Activated B cell treated with CpG ODN at 0.5 μM for 24 hours (primary cell): ENCODE measurements at regions of chr6 and their contacts with region 1.

Region 1: DNA sequence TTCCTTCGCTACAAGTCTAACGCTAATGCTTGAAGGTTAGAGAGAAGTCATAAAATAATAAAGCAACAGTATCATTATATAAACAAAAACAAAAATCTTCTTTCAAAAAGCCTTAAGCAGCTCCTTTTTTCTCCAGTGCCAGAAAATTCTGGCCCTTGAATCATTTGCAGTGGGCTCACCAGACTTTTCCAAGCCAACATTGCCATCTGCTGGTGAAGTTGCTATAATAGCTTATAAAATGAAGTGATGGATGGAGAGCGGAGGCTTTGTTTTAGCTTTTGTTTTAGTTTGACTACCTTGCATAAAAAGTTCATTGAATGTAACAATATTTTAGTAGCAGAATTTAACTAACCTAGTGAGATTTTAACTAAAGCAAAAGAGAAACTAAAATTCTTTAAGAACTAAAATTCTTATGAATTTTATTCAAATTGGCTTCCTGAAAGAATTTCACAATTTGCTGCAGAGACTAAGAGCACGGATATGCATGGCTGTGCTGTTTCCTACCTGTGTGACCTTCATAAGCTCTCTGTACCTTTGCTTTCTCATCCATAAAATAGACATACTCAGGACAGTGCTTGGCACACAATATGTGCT is 44.8 kb upstream of the SLC2A12 start:
- DNase-seq: no peak
- ATAC-seq: peak; percentile 45
- H3K4me3 Mint-ChIP-seq: no peak overlapping the region
- H3K27ac Mint-ChIP-seq: no peak overlapping the region
- H3K4me1 Mint-ChIP-seq: peaks cover 4% of the 10 kb centered on the region
- H3K27me3 Mint-ChIP-seq: peaks cover 6% of the 10 kb centered on the region
- CTCF ChIP-seq: no peak

Region 2: DNA sequence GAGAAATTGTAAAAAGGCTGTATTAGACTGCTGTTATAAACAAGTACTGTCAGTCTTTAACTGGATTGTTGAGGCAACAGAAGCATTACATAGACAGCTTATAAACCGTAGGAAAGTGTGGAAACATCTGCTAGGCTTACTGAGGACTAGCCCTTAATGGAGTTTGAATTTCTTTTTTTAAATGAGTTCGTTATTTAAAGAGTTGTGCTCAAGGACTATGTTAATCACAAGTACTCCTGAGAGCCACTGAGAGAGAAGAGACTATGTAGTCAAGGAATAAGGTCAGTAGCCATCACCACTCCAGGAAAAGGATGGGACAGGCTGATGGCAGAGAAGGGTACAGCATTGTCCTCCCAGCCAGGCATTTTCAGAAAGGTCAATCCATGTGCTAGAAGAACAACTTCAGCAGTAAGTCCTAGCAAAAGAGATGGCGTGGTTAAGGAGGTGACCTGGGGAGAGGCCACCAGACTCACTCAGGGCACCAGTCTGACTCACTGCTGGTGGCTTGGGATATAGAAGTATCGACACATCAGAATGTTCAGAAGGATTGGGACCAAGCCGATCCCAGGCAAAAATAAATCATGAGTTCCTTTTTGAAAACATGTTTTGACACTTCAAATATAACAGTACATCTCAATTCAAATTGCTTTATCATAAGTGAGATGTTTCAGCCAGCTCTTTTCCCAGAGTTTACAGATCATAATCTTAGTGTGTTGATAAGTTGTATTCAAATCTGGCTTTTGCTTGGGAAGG is 1276.4 kb before region 1 on chr6:
- CTCF ChIA-PET with region 1: interaction called, 3 read pairs
- POLR2A ChIA-PET with region 1: no interaction called
- intact Hi-C with region 1: loop called (anchors 2 kb)
- DNase-seq: no peak
- ATAC-seq: no peak
- H3K4me3 Mint-ChIP-seq: no peak overlapping the region
- H3K27ac Mint-ChIP-seq: peak overlapping the region; percentile 99
- H3K4me1 Mint-ChIP-seq: peaks cover 48% of the 10 kb centered on the region
- H3K27me3 Mint-ChIP-seq: no peaks in the 10 kb centered on the region
- CTCF ChIP-seq: no peak

Region 3: DNA sequence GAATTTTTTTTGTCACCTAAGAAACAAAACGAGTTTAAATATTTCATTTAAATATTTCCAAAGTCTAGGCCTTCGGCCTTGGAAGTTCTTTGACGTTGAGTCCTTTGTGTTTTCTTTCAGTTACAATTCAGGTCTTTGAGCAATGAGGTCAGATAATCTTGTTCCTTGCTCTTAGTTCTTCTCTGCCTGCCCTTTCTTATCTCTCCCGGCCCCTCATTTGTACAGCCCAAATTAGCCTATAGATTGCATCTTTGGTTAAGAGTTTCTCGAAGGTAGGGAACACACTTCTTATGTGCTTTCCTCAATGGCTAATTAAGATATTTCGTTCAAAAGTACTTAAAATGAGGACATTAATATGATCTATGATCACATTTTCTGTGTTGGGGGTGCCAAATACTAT is 1264.3 kb before region 1 on chr6:
- CTCF ChIA-PET with region 1: no interaction called
- POLR2A ChIA-PET with region 1: no interaction called
- intact Hi-C with region 1: no loop called
- DNase-seq: no peak
- ATAC-seq: no peak
- H3K4me3 Mint-ChIP-seq: no peak overlapping the region
- H3K27ac Mint-ChIP-seq: no peak overlapping the region
- H3K4me1 Mint-ChIP-seq: no peaks in the 10 kb centered on the region
- H3K27me3 Mint-ChIP-seq: peaks cover 10% of the 10 kb centered on the region
- CTCF ChIP-seq: no peak

Region 4: GRCh38 chr6:133184798-133185372 is 912.3 kb before region 1 on chr6:
- CTCF ChIA-PET with region 1: interaction called, 3 read pairs
- POLR2A ChIA-PET with region 1: no interaction called
- intact Hi-C with region 1: loop called (anchors 2 kb)
- DNase-seq: no peak
- ATAC-seq: no peak
- H3K4me3 Mint-ChIP-seq: no peak overlapping the region
- H3K27ac Mint-ChIP-seq: no peak overlapping the region
- H3K4me1 Mint-ChIP-seq: no peaks in the 10 kb centered on the region
- H3K27me3 Mint-ChIP-seq: no peaks in the 10 kb centered on the region
- CTCF ChIP-seq: no peak

Region 5: GRCh38 chr6:133837801-133838349 is 259.3 kb before region 1 on chr6:
- CTCF ChIA-PET with region 1: interaction called, 11 read pairs
- POLR2A ChIA-PET with region 1: no interaction called
- intact Hi-C with region 1: loop called (anchors 1 kb)
- DNase-seq: peak; percentile 29
- ATAC-seq: peak; percentile 49
- H3K4me3 Mint-ChIP-seq: peak overlapping the region; percentile 51
- H3K27ac Mint-ChIP-seq: no peak overlapping the region
- H3K4me1 Mint-ChIP-seq: peaks cover 8% of the 10 kb centered on the region
- H3K27me3 Mint-ChIP-seq: peaks cover 28% of the 10 kb centered on the region
- CTCF ChIP-seq: no peak

Region 6: GRCh38 chr6:133923938-133924593 is 173.1 kb before region 1 on chr6:
- CTCF ChIA-PET with region 1: interaction called, 394 read pairs
- POLR2A ChIA-PET with region 1: interaction called, 6 read pairs
- intact Hi-C with region 1: loop called (anchors 1 kb)
- DNase-seq: no peak
- ATAC-seq: peak; percentile 88
- H3K4me3 Mint-ChIP-seq: no peak overlapping the region
- H3K27ac Mint-ChIP-seq: no peak overlapping the region
- H3K4me1 Mint-ChIP-seq: no peaks in the 10 kb centered on the region
- H3K27me3 Mint-ChIP-seq: peaks cover 22% of the 10 kb centered on the region
- CTCF ChIP-seq: peak; percentile 56

Region 7: GRCh38 chr6:133992992-133993680 is 104.1 kb before region 1 on chr6:
- CTCF ChIA-PET with region 1: no interaction called
- POLR2A ChIA-PET with region 1: no interaction called
- intact Hi-C with region 1: no loop called
- DNase-seq: no peak
- ATAC-seq: no peak
- H3K4me3 Mint-ChIP-seq: no peak overlapping the region
- H3K27ac Mint-ChIP-seq: no peak overlapping the region
- H3K4me1 Mint-ChIP-seq: no peaks in the 10 kb centered on the region
- H3K27me3 Mint-ChIP-seq: no peaks in the 10 kb centered on the region
- CTCF ChIP-seq: no peak

Region 8: GRCh38 chr6:134063966-134064445 is 33.2 kb before region 1 on chr6:
- CTCF ChIA-PET with region 1: interaction called, 47 read pairs
- POLR2A ChIA-PET with region 1: no interaction called
- intact Hi-C with region 1: loop called (anchors 2 kb)
- DNase-seq: no peak
- ATAC-seq: peak; percentile 94
- H3K4me3 Mint-ChIP-seq: no peak overlapping the region
- H3K27ac Mint-ChIP-seq: no peak overlapping the region
- H3K4me1 Mint-ChIP-seq: peaks cover 2% of the 10 kb centered on the region
- H3K27me3 Mint-ChIP-seq: peaks cover 3% of the 10 kb centered on the region
- CTCF ChIP-seq: peak; percentile 16

Region 9: GRCh38 chr6:134138226-134138975 is 41.2 kb after region 1 on chr6:
- CTCF ChIA-PET with region 1: no interaction called
- POLR2A ChIA-PET with region 1: no interaction called
- intact Hi-C with region 1: no loop called
- DNase-seq: no peak
- ATAC-seq: no peak
- H3K4me3 Mint-ChIP-seq: no peak overlapping the region
- H3K27ac Mint-ChIP-seq: no peak overlapping the region
- H3K4me1 Mint-ChIP-seq: no peaks in the 10 kb centered on the region
- H3K27me3 Mint-ChIP-seq: peaks cover 4% of the 10 kb centered on the region
- CTCF ChIP-seq: no peak